Heart left ventricle (tissue), 16 donors: ENCODE measurements at regions of chr15 and their contacts with region 1.

Region 1: DNA sequence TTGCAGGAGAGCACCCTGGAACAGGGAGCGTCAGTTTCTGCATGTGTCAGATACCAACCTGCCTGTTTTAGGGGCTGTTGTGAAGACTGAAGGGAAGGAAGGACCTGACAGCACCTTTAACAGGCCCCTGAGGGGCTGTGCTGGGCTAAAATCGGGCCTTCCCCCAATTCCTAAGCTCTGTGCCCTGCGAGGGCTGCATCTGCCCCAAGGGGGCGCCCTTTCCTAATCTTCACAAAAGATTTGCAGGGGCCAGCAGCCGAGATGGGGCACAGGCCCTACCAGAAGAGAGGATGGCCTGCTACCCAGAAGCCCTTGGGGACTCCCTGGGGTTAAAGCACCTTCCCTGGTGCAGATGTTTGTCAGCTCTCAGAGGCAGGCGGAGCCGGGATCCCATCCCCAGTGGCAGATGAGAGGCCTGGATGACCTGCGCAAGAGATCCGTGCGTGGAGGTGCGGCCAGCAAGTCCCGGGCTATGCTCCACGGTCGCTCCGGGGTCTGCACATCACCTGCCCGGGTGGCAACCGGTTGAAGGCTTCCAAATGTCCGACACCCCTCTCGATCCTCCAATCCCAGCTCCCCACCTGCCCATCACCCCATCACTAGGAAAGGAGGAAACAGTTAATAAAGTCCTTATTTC is 53.6 kb downstream of the RHCG start:
- DNase-seq: no peak
- ATAC-seq: peak in 1 of 4 donors; percentile 49
- H3K4me3 ChIP-seq: no peak overlapping the region
- H3K27ac ChIP-seq: no peak overlapping the region
- H3K4me1 ChIP-seq: no peaks in the 10 kb centered on the region
- H3K27me3 ChIP-seq: peaks cover 0 to 68% (median 22%) of the 10 kb centered on the region in 9 donors
- CTCF ChIP-seq: peak in 11 of 12 donors; percentile 12 to 50 (median 42)
- POLR2A ChIP-seq: no peak

Region 2: GRCh38 chr15:89551502-89551901 is 108.7 kb after region 1 on chr15:
- intact Hi-C with region 1: loop called in 2 of 10 experiments (anchors 5 to 10 kb)
- DNase-seq: no peak
- ATAC-seq: no peak
- H3K4me3 ChIP-seq: no peak overlapping the region
- H3K27ac ChIP-seq: no peak overlapping the region
- H3K4me1 ChIP-seq: no peaks in the 10 kb centered on the region
- H3K27me3 ChIP-seq: peaks cover 0 to 12% (median 0%) of the 10 kb centered on the region in 9 donors
- CTCF ChIP-seq: no peak
- POLR2A ChIP-seq: no peak

Region 3: GRCh38 chr15:89556413-89557262 is 113.8 kb after region 1 on chr15:
- intact Hi-C with region 1: loop called in 2 of 10 experiments (anchors 5 to 10 kb)
- DNase-seq: peak in 3 of 5 donors; percentile 28 to 45 (median 41)
- ATAC-seq: peak in 2 of 4 donors; percentile 41 to 42
- H3K4me3 ChIP-seq: no peak overlapping the region
- H3K27ac ChIP-seq: no peak overlapping the region
- H3K4me1 ChIP-seq: no peaks in the 10 kb centered on the region
- H3K27me3 ChIP-seq: peaks cover 0 to 28% (median 0%) of the 10 kb centered on the region in 9 donors
- CTCF ChIP-seq: peak; percentile 60 to 90 (median 80)
- POLR2A ChIP-seq: no peak